Naive thymus-derived CD4-positive, alpha-beta T cell (primary cell): ENCODE measurements at regions of chr20 and their contacts with region 1.

Region 1: GRCh38 chr20:63707549-63708300 is at the starts of genes ARFRP1 and ZGPAT:
- DNase-seq: peak; percentile 77 to 92 (median 88)
- ATAC-seq: peak; percentile 92
- H3K4me3 ChIP-seq: peak within 1 kb of the TSS; percentile 91
- H3K4me3 Mint-ChIP-seq: peak within 1 kb of the TSS; percentile 86 to 95 (median 90)
- H3K27ac ChIP-seq: peak within 1 kb of the TSS; percentile 81
- H3K27ac Mint-ChIP-seq: peak within 1 kb of the TSS; percentile 82 to 97 (median 87)
- H3K4me1 ChIP-seq: peaks cover 22 to 30% of the 10 kb centered on the region in 2 donors
- H3K4me1 Mint-ChIP-seq: peaks cover 33 to 61% (median 46%) of the 10 kb centered on the region in 7 donors
- H3K27me3 ChIP-seq: no peaks in the 10 kb centered on the region
- H3K27me3 Mint-ChIP-seq: no peaks in the 10 kb centered on the region
- total RNA-seq, gene ARFRP1: 55.4 to 92.1 (median 66.2) TPM
- total RNA-seq, gene ZGPAT: 42.9 to 49.9 (median 45.4) TPM

Region 2: GRCh38 chr20:63377256-63377941 is 330.3 kb before region 1 on chr20:
- CTCF ChIA-PET with region 1: no interaction called
- POLR2A ChIA-PET with region 1: no interaction called
- intact Hi-C with region 1: no loop called
- DNase-seq: no peak
- ATAC-seq: no peak
- H3K4me3 ChIP-seq: no peak overlapping the region
- H3K4me3 Mint-ChIP-seq: no peak overlapping the region
- H3K27ac ChIP-seq: no peak overlapping the region
- H3K27ac Mint-ChIP-seq: no peak overlapping the region
- H3K4me1 ChIP-seq: no peaks in the 10 kb centered on the region
- H3K4me1 Mint-ChIP-seq: peaks cover 0 to 3% (median 0%) of the 10 kb centered on the region in 7 donors
- H3K27me3 ChIP-seq: no peaks in the 10 kb centered on the region
- H3K27me3 Mint-ChIP-seq: peaks cover 6 to 27% (median 16%) of the 10 kb centered on the region in 5 donors

Region 3: GRCh38 chr20:63442100-63442493 is 265.6 kb before region 1 on chr20:
- CTCF ChIA-PET with region 1: no interaction called
- POLR2A ChIA-PET with region 1: no interaction called
- intact Hi-C with region 1: loop called in 1 of 2 experiments (anchors 5 kb)
- DNase-seq: peak in 8 of 9 donors; percentile 44 to 65 (median 48)
- ATAC-seq: peak; percentile 77
- H3K4me3 ChIP-seq: no peak overlapping the region
- H3K4me3 Mint-ChIP-seq: peak overlapping the region in 2 of 10 donors; percentile 11 to 65
- H3K27ac ChIP-seq: no peak overlapping the region
- H3K27ac Mint-ChIP-seq: peak overlapping the region in 1 of 9 donors; percentile 60
- H3K4me1 ChIP-seq: peaks cover 16 to 17% of the 10 kb centered on the region in 2 donors
- H3K4me1 Mint-ChIP-seq: peaks cover 9 to 22% (median 14%) of the 10 kb centered on the region in 7 donors
- H3K27me3 ChIP-seq: no peaks in the 10 kb centered on the region
- H3K27me3 Mint-ChIP-seq: peaks cover under 1 to 4% (median 2%) of the 10 kb centered on the region in 5 donors

Region 4: DNA sequence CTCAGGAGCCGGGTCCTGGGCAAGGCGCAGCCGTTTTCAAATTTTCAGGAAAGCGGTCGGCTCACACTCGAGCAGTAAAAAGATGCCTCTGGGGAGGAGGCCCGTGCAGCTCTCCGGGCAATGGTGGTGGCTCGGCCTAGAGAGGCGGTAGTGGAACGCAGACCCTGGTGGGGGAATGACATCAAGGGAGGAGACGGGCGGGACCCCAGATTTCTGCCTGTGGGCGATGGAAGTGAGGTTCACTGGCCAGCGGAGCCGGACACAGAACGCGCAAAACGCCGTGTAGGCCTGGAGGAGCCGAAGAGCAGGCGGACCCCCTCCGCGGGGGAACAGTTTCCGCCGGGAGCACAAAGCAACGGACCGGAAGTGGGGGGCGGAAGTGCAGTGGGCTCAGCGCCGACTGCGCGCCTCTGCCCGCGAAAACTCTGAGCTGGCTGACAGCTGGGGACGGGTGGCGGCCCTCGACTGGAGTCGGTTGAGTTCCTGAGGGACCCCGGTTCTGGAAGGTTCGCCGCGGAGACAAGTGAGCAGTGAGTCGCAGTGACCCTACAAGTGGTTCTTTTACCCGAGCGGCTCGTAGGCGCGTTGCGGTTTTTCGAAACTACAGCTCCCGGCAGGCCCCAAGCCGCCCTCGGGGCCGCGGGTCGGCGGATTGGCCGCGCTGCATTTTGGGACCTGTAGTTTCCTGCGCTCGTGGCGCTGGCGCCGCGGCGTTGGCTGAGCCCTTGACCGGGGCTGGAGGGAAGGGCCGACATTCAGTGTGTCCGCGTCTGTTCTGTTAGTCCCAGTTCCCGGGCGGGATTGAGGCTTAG is 49.6 kb before region 1 on chr20 and contains the start of gene RTEL1:
- CTCF ChIA-PET with region 1: no interaction called
- POLR2A ChIA-PET with region 1: interaction called, 6 read pairs
- intact Hi-C with region 1: loop called (anchors 1 kb)
- DNase-seq: peak; percentile 79 to 99 (median 89)
- ATAC-seq: peak; percentile 90
- H3K4me3 ChIP-seq: peak within 1 kb of the TSS; percentile 100
- H3K4me3 Mint-ChIP-seq: peak within 1 kb of the TSS; percentile 86 to 97 (median 94)
- H3K27ac ChIP-seq: peak within 1 kb of the TSS; percentile 83
- H3K27ac Mint-ChIP-seq: peak within 1 kb of the TSS; percentile 93 to 97 (median 95)
- H3K4me1 ChIP-seq: peaks cover 18 to 20% of the 10 kb centered on the region in 2 donors
- H3K4me1 Mint-ChIP-seq: peaks cover 14 to 57% (median 36%) of the 10 kb centered on the region in 7 donors
- H3K27me3 ChIP-seq: no peaks in the 10 kb centered on the region
- H3K27me3 Mint-ChIP-seq: peaks cover 0 to 2% (median 0%) of the 10 kb centered on the region in 5 donors
- total RNA-seq, gene RTEL1: 28.4 to 47.2 (median 32.4) TPM

Region 5: DNA sequence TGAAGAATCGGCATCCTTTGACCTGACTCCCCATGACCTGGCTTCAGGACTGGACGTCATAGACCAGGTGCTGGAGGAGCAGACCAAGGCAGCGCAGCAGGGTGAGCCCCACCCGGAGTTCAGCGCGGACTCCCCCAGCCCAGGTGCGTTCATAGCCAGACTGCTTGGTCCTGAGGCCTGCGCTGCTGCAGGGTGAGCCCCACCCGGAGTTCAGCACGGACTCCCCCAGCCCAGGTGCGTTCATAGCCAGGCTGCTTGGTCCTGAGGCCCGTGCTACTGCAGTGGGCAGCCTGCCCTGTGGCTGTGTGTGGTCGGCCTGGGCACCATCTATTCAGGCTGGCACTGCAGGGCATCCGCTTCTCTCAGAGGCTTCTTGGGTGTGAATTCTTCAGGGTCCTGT is 33.8 kb before region 1 on chr20:
- CTCF ChIA-PET with region 1: no interaction called
- POLR2A ChIA-PET with region 1: no interaction called
- intact Hi-C with region 1: no loop called
- DNase-seq: no peak
- ATAC-seq: no peak
- H3K4me3 ChIP-seq: no peak overlapping the region
- H3K4me3 Mint-ChIP-seq: no peak overlapping the region
- H3K27ac ChIP-seq: no peak overlapping the region
- H3K27ac Mint-ChIP-seq: no peak overlapping the region
- H3K4me1 ChIP-seq: no peaks in the 10 kb centered on the region
- H3K4me1 Mint-ChIP-seq: peaks cover 0 to 2% (median 0%) of the 10 kb centered on the region in 7 donors
- H3K27me3 ChIP-seq: no peaks in the 10 kb centered on the region
- H3K27me3 Mint-ChIP-seq: no peaks in the 10 kb centered on the region

Region 6: GRCh38 chr20:63750807-63751470 is 43.2 kb after region 1 on chr20:
- CTCF ChIA-PET with region 1: interaction called, 3 read pairs
- POLR2A ChIA-PET with region 1: interaction called, 14 read pairs
- intact Hi-C with region 1: loop called (anchors 1 kb)
- DNase-seq: peak in 8 of 9 donors; percentile 54 to 74 (median 66)
- ATAC-seq: peak; percentile 84
- H3K4me3 ChIP-seq: peak overlapping the region; percentile 50
- H3K4me3 Mint-ChIP-seq: peak overlapping the region; percentile 69 to 83 (median 75)
- H3K27ac ChIP-seq: peak overlapping the region; percentile 71
- H3K27ac Mint-ChIP-seq: peak overlapping the region; percentile 78 to 96 (median 92)
- H3K4me1 ChIP-seq: peaks cover 13 to 23% of the 10 kb centered on the region in 2 donors
- H3K4me1 Mint-ChIP-seq: peaks cover 12 to 50% (median 28%) of the 10 kb centered on the region in 7 donors
- H3K27me3 ChIP-seq: no peaks in the 10 kb centered on the region
- H3K27me3 Mint-ChIP-seq: peaks cover 0 to 3% (median 0%) of the 10 kb centered on the region in 5 donors

Region 7: GRCh38 chr20:63894358-63895201 is 186.9 kb after region 1 on chr20 and contains the start of gene DNAJC5:
- CTCF ChIA-PET with region 1: interaction called, 3 read pairs
- POLR2A ChIA-PET with region 1: no interaction called
- intact Hi-C with region 1: loop called in 1 of 2 experiments (anchors 1 kb)
- DNase-seq: peak; percentile 96 to 99 (median 98)
- ATAC-seq: peak; percentile 95
- H3K4me3 ChIP-seq: peak within 1 kb of the TSS; percentile 56
- H3K4me3 Mint-ChIP-seq: peak within 1 kb of the TSS; percentile 86 to 99 (median 96)
- H3K27ac ChIP-seq: peak within 1 kb of the TSS; percentile 94
- H3K27ac Mint-ChIP-seq: peak within 1 kb of the TSS; percentile 94 to 98 (median 97)
- H3K4me1 ChIP-seq: peaks cover 21% of the 10 kb centered on the region in 2 donors
- H3K4me1 Mint-ChIP-seq: peaks cover 34 to 49% (median 43%) of the 10 kb centered on the region in 7 donors
- H3K27me3 ChIP-seq: no peaks in the 10 kb centered on the region
- H3K27me3 Mint-ChIP-seq: peaks cover 0 to 2% (median 0%) of the 10 kb centered on the region in 5 donors
- total RNA-seq, gene DNAJC5: 35.5 to 56.8 (median 50.3) TPM

Region 8: DNA sequence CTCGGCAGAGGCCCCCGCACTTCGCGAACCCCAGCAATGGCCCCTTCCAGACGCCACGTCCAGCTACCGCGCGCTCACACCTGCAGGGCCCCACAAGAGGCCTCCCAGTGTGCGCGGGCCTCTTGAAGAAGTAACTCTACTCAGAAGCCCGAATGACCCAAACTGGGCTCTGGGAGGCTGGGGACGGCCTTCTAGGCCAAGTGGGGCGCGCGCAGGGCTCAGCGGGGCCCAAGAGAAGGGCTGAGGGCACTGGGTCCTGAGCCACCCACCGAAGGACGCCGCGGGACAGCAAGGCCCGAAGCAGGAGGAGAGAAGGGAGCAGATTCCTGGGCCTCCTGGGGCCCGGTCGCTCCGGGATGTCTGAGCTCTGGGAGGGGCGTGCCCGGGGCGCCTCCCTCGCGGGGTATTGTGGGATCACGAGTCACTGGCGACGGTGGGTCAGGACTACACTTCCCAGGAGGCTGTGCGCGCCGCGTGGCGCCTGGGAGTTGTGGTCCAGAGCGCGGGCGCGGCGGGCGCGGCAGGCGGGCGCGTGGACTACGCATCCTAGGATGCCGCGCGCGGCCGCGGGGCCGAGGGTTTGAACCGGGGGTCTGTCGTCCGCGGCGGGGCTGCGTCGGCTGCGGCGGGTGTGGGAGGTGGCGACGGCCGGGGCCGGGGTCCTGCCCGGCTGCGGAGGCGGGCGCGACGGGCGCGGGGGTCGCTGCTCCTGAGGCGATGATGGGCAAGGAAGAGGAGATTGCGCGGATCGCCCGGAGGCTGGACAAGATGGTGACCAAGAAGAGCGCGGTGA is 355.1 kb after region 1 on chr20 and contains the start of gene TCEA2:
- CTCF ChIA-PET with region 1: interaction called, 3 read pairs
- POLR2A ChIA-PET with region 1: interaction called, 4 read pairs
- intact Hi-C with region 1: loop called (anchors 1 to 5 kb)
- DNase-seq: peak; percentile 85 to 95 (median 90)
- ATAC-seq: peak; percentile 97
- H3K4me3 ChIP-seq: peak within 1 kb of the TSS; percentile 56
- H3K4me3 Mint-ChIP-seq: peak within 1 kb of the TSS; percentile 83 to 95 (median 88)
- H3K27ac ChIP-seq: peak within 1 kb of the TSS; percentile 74
- H3K27ac Mint-ChIP-seq: peak within 1 kb of the TSS; percentile 69 to 95 (median 79)
- H3K4me1 ChIP-seq: peaks cover 23 to 40% of the 10 kb centered on the region in 2 donors
- H3K4me1 Mint-ChIP-seq: peaks cover 30 to 54% (median 37%) of the 10 kb centered on the region in 7 donors
- H3K27me3 ChIP-seq: no peaks in the 10 kb centered on the region
- H3K27me3 Mint-ChIP-seq: no peaks in the 10 kb centered on the region
- total RNA-seq, gene TCEA2: 35.5 to 73.2 (median 47.3) TPM